ENCODE measurements at regions of chrX and their contacts with region 1.

Region 1: GRCh38 chrX:47144626-47145394 is at the starts of genes NDUFB11 and RBM10:
- DNase-seq: peak; percentile 93
- H3K4me3 Mint-ChIP-seq: peak within 1 kb of the TSS; percentile 94
- H3K27ac Mint-ChIP-seq: peak within 1 kb of the TSS; percentile 99
- H3K4me1 Mint-ChIP-seq: peaks cover 28% of the 10 kb centered on the region
- H3K27me3 Mint-ChIP-seq: no peaks in the 10 kb centered on the region
- total RNA-seq, gene NDUFB11: 109 to 111 TPM
- total RNA-seq, gene RBM10: 59.0 to 59.2 TPM

Region 2: DNA sequence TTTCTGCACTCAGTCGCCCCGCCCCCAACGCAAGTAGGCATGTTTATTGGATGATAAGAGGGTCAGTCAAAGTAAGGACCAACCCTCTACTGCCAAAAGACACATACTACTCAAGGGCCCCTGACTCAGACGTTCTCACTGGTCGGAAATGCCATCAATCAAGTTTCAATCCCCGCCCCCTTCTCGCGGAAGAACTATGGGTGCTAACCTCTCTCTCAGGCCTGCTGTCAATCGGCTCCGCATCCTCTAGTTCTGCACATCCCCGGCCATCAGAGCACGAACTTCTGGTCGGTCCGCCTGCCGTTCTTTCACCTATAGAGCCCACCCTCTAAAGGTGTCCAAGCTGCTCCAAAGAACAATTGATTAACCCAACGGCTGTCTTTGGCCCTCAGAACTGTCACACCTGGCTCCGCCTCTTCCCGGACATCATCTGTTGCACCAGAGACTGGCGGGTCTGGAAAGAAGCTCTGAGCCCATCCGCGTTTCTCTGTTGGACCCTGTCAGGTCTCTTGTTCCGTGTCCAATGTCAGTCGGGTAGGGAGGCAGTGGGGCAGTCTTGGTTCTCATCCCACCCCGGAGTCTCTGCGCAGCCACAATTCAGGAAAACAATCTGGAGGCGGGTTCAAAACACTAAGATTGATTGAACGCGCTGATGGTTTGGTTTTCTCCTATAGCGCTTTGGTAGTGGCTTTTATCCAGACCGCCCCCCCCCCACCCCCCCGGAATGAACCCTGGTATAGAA is 15.5 kb before region 1 on chrX:
- CTCF ChIA-PET with region 1: interaction called, 22 read pairs
- POLR2A ChIA-PET with region 1: no interaction called
- DNase-seq: peak; percentile 90
- H3K4me3 Mint-ChIP-seq: peak overlapping the region; percentile 93
- H3K27ac Mint-ChIP-seq: peak overlapping the region; percentile 98
- H3K4me1 Mint-ChIP-seq: peaks cover 10% of the 10 kb centered on the region
- H3K27me3 Mint-ChIP-seq: no peaks in the 10 kb centered on the region

Region 3: DNA sequence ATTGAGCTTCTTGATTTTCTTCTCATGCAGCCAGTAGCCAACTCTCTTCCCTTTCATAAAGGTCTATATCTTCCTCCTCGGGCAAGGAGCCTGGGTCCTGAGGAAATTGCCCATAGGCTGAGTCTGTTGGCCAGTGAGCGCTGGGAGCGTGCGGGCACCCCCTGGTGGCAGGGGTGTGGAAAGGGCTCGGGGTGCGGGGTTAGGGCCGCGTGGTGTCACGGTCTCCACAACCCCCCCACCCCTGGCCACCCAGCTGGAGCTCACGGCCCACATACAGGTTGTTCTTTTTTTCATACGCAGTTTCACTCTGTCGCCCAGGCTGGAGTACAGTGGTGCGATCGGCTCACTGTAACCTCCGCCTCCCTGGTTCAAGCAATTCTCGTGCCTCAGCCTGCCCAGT is 13.3 kb after region 1 on chrX:
- CTCF ChIA-PET with region 1: interaction called, 10 read pairs
- POLR2A ChIA-PET with region 1: no interaction called
- DNase-seq: no peak
- H3K4me3 Mint-ChIP-seq: no peak overlapping the region
- H3K27ac Mint-ChIP-seq: no peak overlapping the region
- H3K4me1 Mint-ChIP-seq: no peaks in the 10 kb centered on the region
- H3K27me3 Mint-ChIP-seq: no peaks in the 10 kb centered on the region

Measured in activated CD4-positive, alpha-beta T cell treated with anti-CD3 and anti-CD28 coated beads, Interleukin-2, amount 10 ng/mL, durations not matched to agents 7 days and 5 days (primary cell).